ENCODE measurements at regions of chr10 and their contacts with region 1.

Region 1: DNA sequence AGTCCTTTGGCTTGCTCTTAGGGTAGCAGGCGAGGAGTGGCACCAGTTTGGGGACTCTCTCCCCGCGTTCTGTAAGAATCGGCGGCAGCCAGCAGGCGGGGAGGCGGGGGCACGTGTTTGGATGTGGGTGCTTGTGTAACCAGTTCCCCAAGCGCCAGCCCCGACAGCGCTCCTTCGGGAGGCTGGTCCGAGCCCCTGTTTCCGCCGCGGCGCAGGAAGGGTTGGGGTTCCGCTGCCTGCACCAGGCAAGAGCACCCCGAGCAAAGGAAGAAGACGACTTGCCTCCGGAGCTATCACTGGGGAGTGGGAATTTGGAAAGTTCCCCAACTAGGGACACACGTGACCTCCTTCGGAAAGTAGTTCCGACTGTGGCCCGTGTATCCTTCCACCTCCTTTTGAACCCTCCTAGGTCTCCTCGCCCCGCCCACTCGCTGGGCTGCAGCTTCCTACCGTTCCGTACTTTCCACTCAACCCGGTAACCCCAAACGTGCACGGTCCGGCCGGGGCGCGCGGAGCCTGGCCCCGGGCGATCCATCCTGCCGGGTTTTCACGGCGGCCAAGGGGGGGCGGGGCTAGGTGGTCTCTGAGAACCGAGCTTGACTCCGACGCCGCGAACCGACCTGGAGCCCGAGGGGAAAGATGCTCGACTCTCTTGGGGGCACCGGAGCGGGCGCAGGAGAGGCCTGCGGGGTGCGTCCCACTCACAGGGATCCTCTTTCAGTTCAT is 1.2 kb downstream of the KLLN start:
- DNase-seq: peak; percentile 91
- ATAC-seq: peak; percentile 54
- H3K4me3 ChIP-seq: peak overlapping the region; percentile 65 to 94 (median 80)
- H3K27ac ChIP-seq: peak overlapping the region; percentile 88
- H3K4me1 ChIP-seq: peaks cover 13% of the 10 kb centered on the region
- H3K27me3 ChIP-seq: no peaks in the 10 kb centered on the region; a peak in 1 of 5 replicates
- CTCF ChIP-seq: no peak
- EP300 ChIP-seq: peak; percentile 68 to 79; a peak in 1 of 4 replicates
- POLR2A ChIP-seq: peak; percentile 87 to 91
- RAD21 ChIP-seq: peak; percentile 61

Region 2: GRCh38 chr10:87798082-87798481 is 64.0 kb before region 1 on chr10:
- CTCF ChIA-PET with region 1: no interaction called
- POLR2A ChIA-PET with region 1: no interaction called
- in situ Hi-C with region 1: no loop called
- intact Hi-C with region 1: no loop called
- DNase-seq: no peak
- ATAC-seq: no peak
- H3K4me3 ChIP-seq: no peak overlapping the region
- H3K27ac ChIP-seq: no peak overlapping the region
- H3K4me1 ChIP-seq: no peaks in the 10 kb centered on the region
- H3K27me3 ChIP-seq: no peaks in the 10 kb centered on the region
- CTCF ChIP-seq: no peak
- EP300 ChIP-seq: no peak
- POLR2A ChIP-seq: no peak
- RAD21 ChIP-seq: no peak

Region 3: DNA sequence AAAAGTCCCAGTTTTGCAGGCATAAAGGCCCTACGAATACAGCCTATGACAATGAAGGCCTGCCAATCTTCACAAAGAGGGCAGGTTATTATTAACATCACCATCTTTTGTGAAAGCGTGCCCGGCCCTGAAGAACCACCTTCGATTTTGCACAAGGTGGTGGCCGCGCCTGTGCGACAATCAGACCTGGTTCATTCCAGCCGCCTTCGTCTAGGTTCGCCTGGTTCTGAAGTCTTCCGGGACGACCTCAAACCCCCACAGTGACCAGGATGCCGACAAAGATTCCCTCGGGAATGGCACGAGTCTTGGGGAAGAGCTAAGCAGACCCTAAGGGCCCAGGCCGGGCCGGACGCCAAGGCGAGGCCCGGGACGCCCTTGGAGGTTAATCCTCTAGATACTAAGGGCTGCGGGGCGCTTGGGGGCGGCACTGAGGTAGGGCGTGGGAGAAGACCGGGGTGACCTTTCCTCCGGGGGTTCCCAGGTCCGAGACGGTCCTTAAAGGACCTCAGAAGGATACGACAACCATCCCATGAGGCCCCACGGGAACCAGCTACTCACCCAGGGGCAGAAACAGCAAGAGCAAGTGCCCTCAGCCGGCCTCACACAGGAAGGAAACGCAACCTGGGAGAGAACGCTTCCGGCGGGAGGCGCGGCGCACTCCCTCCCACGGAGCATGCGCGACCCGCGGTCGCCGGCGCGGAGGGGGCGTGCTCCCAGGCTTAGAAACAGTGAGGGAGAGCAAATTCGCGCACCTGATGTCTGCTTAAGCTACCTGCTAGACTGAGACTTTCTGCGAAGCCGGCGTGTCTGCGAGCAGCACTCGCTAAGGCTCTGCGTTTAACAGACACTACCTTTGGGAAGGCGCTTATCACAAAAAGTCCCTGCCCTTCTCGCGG is 44.3 kb before region 1 on chr10 and contains the start of gene ATAD1:
- CTCF ChIA-PET with region 1: no interaction called
- POLR2A ChIA-PET with region 1: interaction called, 31 read pairs
- in situ Hi-C with region 1: no loop called
- intact Hi-C with region 1: loop called (anchors 2 kb)
- DNase-seq: peak; percentile 86
- ATAC-seq: peak; percentile 96
- H3K4me3 ChIP-seq: peak within 1 kb of the TSS; percentile 76 to 85 (median 78)
- H3K27ac ChIP-seq: peak within 1 kb of the TSS; percentile 89
- H3K4me1 ChIP-seq: peaks cover 32% of the 10 kb centered on the region
- H3K27me3 ChIP-seq: no peaks in the 10 kb centered on the region; a peak in 1 of 5 replicates
- CTCF ChIP-seq: no peak; the same call in 1 of the 2 replicates
- EP300 ChIP-seq: no peak
- POLR2A ChIP-seq: peak; percentile 88 to 90
- RAD21 ChIP-seq: no peak
- total RNA-seq, gene ATAD1: 23.2 and 28.2 TPM in 2 replicates

Region 4: GRCh38 chr10:87842776-87843497 is 19.2 kb before region 1 on chr10:
- CTCF ChIA-PET with region 1: no interaction called
- POLR2A ChIA-PET with region 1: interaction called, 13 read pairs
- in situ Hi-C with region 1: no loop called
- intact Hi-C with region 1: no loop called
- DNase-seq: peak; percentile 60
- ATAC-seq: no peak
- H3K4me3 ChIP-seq: no peak overlapping the region
- H3K27ac ChIP-seq: peak overlapping the region; percentile 31
- H3K4me1 ChIP-seq: peaks cover 21% of the 10 kb centered on the region
- H3K27me3 ChIP-seq: no peaks in the 10 kb centered on the region
- CTCF ChIP-seq: no peak
- EP300 ChIP-seq: no peak
- POLR2A ChIP-seq: no peak
- RAD21 ChIP-seq: no peak

Region 5: GRCh38 chr10:87875929-87876571 is 13.9 kb after region 1 on chr10:
- CTCF ChIA-PET with region 1: no interaction called
- POLR2A ChIA-PET with region 1: interaction called, 26 read pairs
- in situ Hi-C with region 1: no loop called
- intact Hi-C with region 1: no loop called
- DNase-seq: no peak
- ATAC-seq: no peak
- H3K4me3 ChIP-seq: no peak overlapping the region
- H3K27ac ChIP-seq: no peak overlapping the region
- H3K4me1 ChIP-seq: peaks cover 21% of the 10 kb centered on the region
- H3K27me3 ChIP-seq: no peaks in the 10 kb centered on the region
- CTCF ChIP-seq: no peak
- EP300 ChIP-seq: no peak
- POLR2A ChIP-seq: no peak
- RAD21 ChIP-seq: no peak

Region 6: DNA sequence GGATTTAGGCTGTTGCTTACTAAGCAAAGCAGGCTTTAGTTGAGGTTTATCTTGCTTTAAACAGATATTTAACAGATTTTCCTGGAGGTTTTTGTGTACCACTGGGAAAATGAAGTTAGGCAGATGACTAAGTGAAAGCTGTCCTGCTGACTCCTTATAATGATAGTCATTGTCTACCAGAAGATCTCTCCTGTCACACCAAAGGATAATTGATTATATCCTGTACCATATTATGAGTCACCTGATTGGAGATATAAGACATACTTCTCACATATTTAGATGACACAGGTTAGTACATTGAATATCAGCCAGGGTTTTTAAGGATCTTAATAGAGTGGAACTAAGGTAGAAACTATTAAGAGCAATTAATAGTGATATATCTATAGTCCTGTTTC is 69.7 kb after region 1 on chr10:
- CTCF ChIA-PET with region 1: no interaction called
- POLR2A ChIA-PET with region 1: no interaction called
- in situ Hi-C with region 1: no loop called
- intact Hi-C with region 1: loop called (anchors 1 kb)
- DNase-seq: no peak
- ATAC-seq: no peak
- H3K4me3 ChIP-seq: no peak overlapping the region
- H3K27ac ChIP-seq: no peak overlapping the region
- H3K4me1 ChIP-seq: no peaks in the 10 kb centered on the region
- H3K27me3 ChIP-seq: no peaks in the 10 kb centered on the region
- CTCF ChIP-seq: no peak
- EP300 ChIP-seq: no peak
- POLR2A ChIP-seq: no peak
- RAD21 ChIP-seq: no peak

Region 7: GRCh38 chr10:88114368-88114767 is 252.3 kb after region 1 on chr10:
- CTCF ChIA-PET with region 1: interaction called, 3 read pairs
- POLR2A ChIA-PET with region 1: interaction called, 5 read pairs
- in situ Hi-C with region 1: loop called (anchors 5 kb)
- intact Hi-C with region 1: loop called (anchors 1 kb)
- DNase-seq: peak; percentile 44
- ATAC-seq: peak; percentile 98
- H3K4me3 ChIP-seq: no peak overlapping the region
- H3K27ac ChIP-seq: no peak overlapping the region
- H3K4me1 ChIP-seq: 0 out of 2 replicates have a peak, but pooled peaks cover 5% of the 10 kb centered on the region
- H3K27me3 ChIP-seq: no peaks in the 10 kb centered on the region; a peak in 2 of 5 replicates
- CTCF ChIP-seq: peak; percentile 83
- EP300 ChIP-seq: no peak
- POLR2A ChIP-seq: no peak
- RAD21 ChIP-seq: peak; percentile 63

Region 8: DNA sequence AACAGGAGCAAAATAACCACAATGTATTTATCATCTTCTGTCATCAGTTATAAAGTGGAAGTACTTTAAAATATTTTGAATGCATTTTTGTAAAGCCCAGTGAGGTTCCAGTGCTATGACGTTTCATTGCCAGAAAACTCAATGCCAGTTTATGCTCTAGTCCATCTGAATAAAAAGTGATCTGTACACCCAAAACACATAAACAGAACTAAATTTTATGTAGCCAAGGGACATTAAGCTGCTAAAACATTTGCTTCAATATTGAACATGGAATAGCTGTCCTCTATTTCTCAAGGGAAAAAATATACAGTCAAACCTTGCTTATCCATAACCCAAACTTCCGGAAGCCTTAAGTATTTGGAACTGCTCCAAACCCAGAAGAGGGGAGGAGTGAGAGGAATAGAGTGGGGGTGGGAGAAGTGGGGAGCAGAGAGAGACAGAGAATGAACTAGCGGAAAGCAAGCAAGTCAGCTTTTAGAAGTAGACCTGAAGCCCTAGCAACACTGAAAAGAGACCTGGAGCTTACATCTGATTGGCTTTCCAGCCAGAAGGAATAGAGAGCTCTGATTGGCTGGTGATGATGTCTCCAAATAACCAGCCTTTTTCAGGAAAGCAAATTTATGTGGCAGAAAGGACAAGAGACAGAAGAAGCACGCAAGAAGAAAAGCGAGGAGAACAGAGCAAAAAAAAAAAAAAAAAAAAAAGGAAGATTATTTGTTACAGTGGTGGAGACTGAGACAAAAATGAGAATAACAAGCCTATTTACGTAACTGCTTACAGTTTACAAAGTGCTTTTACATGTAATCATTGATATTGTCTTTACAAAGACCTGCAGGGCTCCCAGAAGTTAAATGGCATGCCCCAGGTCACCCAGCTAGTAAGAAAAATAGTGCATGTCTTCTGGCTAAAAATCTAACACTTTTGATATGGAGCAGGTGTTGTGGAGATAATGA is 525.0 kb after region 1 on chr10:
- CTCF ChIA-PET with region 1: interaction called, 5 read pairs
- POLR2A ChIA-PET with region 1: interaction called, 7 read pairs
- in situ Hi-C with region 1: loop called (anchors 5 kb)
- intact Hi-C with region 1: no loop called
- DNase-seq: peak; percentile 50
- ATAC-seq: peak; percentile 77
- H3K4me3 ChIP-seq: peak overlapping the region in 2 of 3 experiments; percentile 18 to 58; a peak in 2 of 6 replicates
- H3K27ac ChIP-seq: peak overlapping the region; percentile 50
- H3K4me1 ChIP-seq: peaks cover 24% of the 10 kb centered on the region
- H3K27me3 ChIP-seq: no peaks in the 10 kb centered on the region
- CTCF ChIP-seq: no peak
- EP300 ChIP-seq: no peak
- POLR2A ChIP-seq: no peak
- RAD21 ChIP-seq: no peak

Measured in HepG2 (cell line).